Naive thymus-derived CD4-positive, alpha-beta T cell (primary cell): ENCODE measurements at regions of chr3 and their contacts with region 1.

Region 1: DNA sequence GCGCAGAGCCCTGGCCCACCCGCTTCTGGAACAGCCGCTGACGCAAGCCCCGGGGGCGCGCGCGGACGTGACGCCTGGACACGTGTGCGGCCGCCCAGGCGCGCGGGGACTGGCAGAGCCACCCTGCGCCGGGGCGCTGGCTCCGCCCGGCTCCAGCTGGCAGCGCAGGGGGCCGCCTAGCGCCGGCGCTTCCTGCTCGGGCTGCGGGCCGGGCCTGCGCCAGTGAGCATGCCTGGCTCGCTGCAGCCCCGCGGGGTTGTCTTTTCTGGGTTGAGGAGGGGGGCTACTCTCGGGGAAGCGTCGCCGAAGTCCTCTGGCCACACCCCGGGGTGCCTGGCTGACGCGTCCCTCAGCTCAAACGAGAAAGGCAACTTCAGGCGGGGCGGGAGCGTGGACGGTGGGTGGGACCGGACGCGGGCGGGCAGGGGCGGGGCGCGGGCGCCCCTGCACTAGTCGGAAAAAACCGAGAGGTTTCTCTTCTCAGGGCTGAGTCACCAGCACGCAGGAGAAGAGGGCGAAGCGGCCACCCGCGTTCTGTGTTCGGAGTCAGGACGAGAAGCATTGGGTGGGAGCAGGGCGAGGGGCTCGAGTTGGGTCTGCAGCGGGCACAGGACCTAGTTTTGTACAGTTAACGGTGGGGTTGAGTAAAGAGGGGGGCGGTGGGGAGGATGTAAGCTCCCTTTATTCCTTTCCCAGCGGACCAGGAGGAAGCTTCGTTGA is at the start of gene SIAH2:
- DNase-seq: peak; percentile 92 to 95 (median 94)
- ATAC-seq: peak; percentile 89
- H3K4me3 ChIP-seq: peak within 1 kb of the TSS; percentile 81
- H3K4me3 Mint-ChIP-seq: peak within 1 kb of the TSS; percentile 97 to 99 (median 98)
- H3K27ac ChIP-seq: peak within 1 kb of the TSS; percentile 99
- H3K27ac Mint-ChIP-seq: peak within 1 kb of the TSS; percentile 99 to 100 (median 100)
- H3K4me1 ChIP-seq: peaks cover 20 to 22% of the 10 kb centered on the region in 2 donors
- H3K4me1 Mint-ChIP-seq: peaks cover 23 to 59% (median 45%) of the 10 kb centered on the region in 7 donors
- H3K27me3 ChIP-seq: no peaks in the 10 kb centered on the region
- H3K27me3 Mint-ChIP-seq: no peaks in the 10 kb centered on the region
- total RNA-seq, gene SIAH2: 19.8 to 39.2 (median 31.0) TPM

Region 2: DNA sequence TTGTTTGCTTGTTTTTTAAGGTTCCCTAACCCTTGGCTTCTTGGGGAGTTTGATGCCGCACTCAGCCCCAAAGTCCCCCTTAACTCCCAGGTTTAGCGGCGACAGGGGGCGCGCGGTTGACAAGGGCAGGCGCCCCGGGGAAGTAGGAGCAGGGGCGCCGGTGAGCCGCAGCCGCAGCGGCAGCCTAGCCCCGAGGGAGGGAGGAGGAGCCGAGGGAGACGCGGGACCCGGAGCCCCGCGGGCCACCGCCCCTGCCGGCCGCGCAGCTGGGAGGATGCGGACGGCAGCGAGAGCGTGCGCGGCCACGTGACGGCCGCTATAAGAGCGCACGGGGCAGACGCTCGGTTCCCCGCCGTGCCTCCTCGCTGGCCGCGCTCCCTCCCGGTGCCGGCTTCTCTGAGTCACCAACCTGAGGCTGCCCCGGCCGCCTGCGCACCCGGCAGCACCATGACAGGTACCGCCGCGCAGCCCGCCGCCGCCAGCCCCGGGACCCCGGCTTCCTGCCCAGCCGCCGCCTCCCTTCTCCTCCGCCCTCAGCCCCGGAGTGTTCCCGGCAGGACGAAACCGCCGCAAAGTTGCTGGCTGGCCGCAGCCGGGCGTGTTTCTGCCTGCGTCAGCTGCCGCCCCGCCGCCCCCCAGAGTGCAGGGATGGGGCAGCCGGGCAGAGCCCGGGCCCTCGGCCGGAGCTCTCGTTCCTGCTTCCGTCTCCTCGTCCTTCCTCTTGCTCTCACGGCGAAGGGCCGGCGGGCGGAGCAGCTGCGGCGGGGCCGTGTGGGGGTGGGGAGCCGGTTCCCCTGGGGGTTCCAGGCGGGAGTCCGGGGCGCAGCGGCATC is 1771.9 kb before region 1 on chr3 and contains the start of gene GYG1:
- CTCF ChIA-PET with region 1: no interaction called
- POLR2A ChIA-PET with region 1: no interaction called
- intact Hi-C with region 1: loop called in 1 of 2 experiments (anchors 10 kb)
- DNase-seq: peak; percentile 56 to 78 (median 70)
- ATAC-seq: peak; percentile 91
- H3K4me3 ChIP-seq: peak within 1 kb of the TSS; percentile 77
- H3K4me3 Mint-ChIP-seq: peak within 1 kb of the TSS; percentile 70 to 91 (median 87)
- H3K27ac ChIP-seq: peak within 1 kb of the TSS; percentile 76
- H3K27ac Mint-ChIP-seq: peak within 1 kb of the TSS; percentile 41 to 87 (median 80)
- H3K4me1 ChIP-seq: peaks cover 8 to 16% of the 10 kb centered on the region in 2 donors
- H3K4me1 Mint-ChIP-seq: peaks cover 5 to 41% (median 28%) of the 10 kb centered on the region in 7 donors
- H3K27me3 ChIP-seq: no peaks in the 10 kb centered on the region
- H3K27me3 Mint-ChIP-seq: peaks cover 0 to 3% (median 0%) of the 10 kb centered on the region in 5 donors
- total RNA-seq, gene GYG1: 15.5 to 39.3 (median 16.2) TPM

Region 3: GRCh38 chr3:149969940-149970715 is 793.2 kb before region 1 on chr3:
- CTCF ChIA-PET with region 1: no interaction called
- POLR2A ChIA-PET with region 1: no interaction called
- intact Hi-C with region 1: loop called in 1 of 2 experiments (anchors 1 kb)
- DNase-seq: peak; percentile 54 to 81 (median 75)
- ATAC-seq: peak; percentile 64
- H3K4me3 ChIP-seq: peak overlapping the region; percentile 53
- H3K4me3 Mint-ChIP-seq: peak overlapping the region; percentile 85 to 96 (median 92)
- H3K27ac ChIP-seq: peak overlapping the region; percentile 63
- H3K27ac Mint-ChIP-seq: peak overlapping the region in 8 of 9 donors; percentile 60 to 94 (median 86)
- H3K4me1 ChIP-seq: peaks cover 0 to 4% of the 10 kb centered on the region in 2 donors
- H3K4me1 Mint-ChIP-seq: peaks cover 16 to 26% (median 20%) of the 10 kb centered on the region in 7 donors
- H3K27me3 ChIP-seq: peaks cover 0 to 5% of the 10 kb centered on the region in 2 donors
- H3K27me3 Mint-ChIP-seq: peaks cover 6 to 55% (median 26%) of the 10 kb centered on the region in 5 donors

Region 4: DNA sequence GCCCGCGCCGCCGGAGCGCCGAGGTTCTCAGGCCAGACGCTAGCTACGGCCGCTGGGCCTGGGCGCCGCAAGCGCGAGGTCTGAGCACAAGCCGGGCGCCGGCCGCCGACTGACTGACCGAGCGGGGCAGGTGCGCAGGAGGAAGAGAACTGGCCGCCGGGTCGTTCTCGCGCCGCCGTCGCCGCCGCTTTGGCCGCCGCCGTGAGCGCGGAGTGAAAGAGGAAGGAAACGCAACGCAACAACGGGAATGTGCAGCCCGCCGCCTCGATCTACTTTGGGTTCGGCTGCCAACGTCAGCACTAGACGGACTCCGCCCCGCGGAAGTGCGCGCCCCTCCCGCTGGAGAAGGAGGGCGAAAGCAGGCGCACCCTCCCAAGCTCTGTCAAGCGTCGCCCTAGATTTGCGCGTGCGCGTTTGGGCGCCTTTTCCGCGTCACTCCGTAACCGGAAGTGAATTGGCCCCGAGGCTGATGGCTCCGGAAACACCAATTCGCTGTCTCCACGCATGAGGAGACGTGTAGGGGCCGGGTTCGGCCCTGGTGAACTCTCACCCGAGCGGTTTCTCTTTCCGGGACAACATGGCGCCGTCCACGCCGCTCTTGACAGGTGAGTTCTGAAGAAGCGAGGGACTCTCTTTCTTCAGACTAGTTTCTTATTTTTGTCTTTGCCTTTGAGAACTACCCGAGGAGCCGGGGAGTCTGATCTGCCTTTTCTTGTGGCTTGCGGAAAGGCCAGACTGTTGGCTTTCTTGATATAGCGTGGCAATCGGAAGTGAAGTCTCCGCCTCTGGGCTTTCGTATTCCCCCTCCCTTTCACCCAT is 216.8 kb before region 1 on chr3 and contains the starts of genes EIF2A and SERP1:
- CTCF ChIA-PET with region 1: interaction called, 4 read pairs
- POLR2A ChIA-PET with region 1: interaction called, 70 read pairs
- intact Hi-C with region 1: loop called (anchors 1 kb)
- DNase-seq: peak; percentile 97 to 100 (median 100)
- ATAC-seq: peak; percentile 94
- H3K4me3 ChIP-seq: peak within 1 kb of the TSS; percentile 78
- H3K4me3 Mint-ChIP-seq: peak within 1 kb of the TSS; percentile 88 to 99 (median 96)
- H3K27ac ChIP-seq: peak within 1 kb of the TSS; percentile 96
- H3K27ac Mint-ChIP-seq: peak within 1 kb of the TSS; percentile 93 to 100 (median 98)
- H3K4me1 ChIP-seq: peaks cover 15 to 23% of the 10 kb centered on the region in 2 donors
- H3K4me1 Mint-ChIP-seq: peaks cover 34 to 84% (median 79%) of the 10 kb centered on the region in 7 donors
- H3K27me3 ChIP-seq: no peaks in the 10 kb centered on the region
- H3K27me3 Mint-ChIP-seq: no peaks in the 10 kb centered on the region
- total RNA-seq, gene EIF2A: 94.7 to 135 (median 105) TPM
- total RNA-seq, gene SERP1: 89.4 to 120 (median 115) TPM

Region 5: GRCh38 chr3:150737874-150738713 is 25.2 kb before region 1 on chr3:
- CTCF ChIA-PET with region 1: no interaction called
- POLR2A ChIA-PET with region 1: interaction called, 3 read pairs
- intact Hi-C with region 1: loop called (anchors 1 kb)
- DNase-seq: peak in 1 of 9 donors; percentile 49
- ATAC-seq: peak; percentile 41
- H3K4me3 ChIP-seq: no peak overlapping the region
- H3K4me3 Mint-ChIP-seq: peak overlapping the region in 1 of 10 donors; percentile 5
- H3K27ac ChIP-seq: no peak overlapping the region
- H3K27ac Mint-ChIP-seq: peak overlapping the region in 3 of 9 donors; percentile 33 to 59 (median 41)
- H3K4me1 ChIP-seq: peaks cover 0 to 5% of the 10 kb centered on the region in 2 donors
- H3K4me1 Mint-ChIP-seq: peaks cover 17 to 60% (median 49%) of the 10 kb centered on the region in 7 donors
- H3K27me3 ChIP-seq: no peaks in the 10 kb centered on the region
- H3K27me3 Mint-ChIP-seq: no peaks in the 10 kb centered on the region

Region 6: DNA sequence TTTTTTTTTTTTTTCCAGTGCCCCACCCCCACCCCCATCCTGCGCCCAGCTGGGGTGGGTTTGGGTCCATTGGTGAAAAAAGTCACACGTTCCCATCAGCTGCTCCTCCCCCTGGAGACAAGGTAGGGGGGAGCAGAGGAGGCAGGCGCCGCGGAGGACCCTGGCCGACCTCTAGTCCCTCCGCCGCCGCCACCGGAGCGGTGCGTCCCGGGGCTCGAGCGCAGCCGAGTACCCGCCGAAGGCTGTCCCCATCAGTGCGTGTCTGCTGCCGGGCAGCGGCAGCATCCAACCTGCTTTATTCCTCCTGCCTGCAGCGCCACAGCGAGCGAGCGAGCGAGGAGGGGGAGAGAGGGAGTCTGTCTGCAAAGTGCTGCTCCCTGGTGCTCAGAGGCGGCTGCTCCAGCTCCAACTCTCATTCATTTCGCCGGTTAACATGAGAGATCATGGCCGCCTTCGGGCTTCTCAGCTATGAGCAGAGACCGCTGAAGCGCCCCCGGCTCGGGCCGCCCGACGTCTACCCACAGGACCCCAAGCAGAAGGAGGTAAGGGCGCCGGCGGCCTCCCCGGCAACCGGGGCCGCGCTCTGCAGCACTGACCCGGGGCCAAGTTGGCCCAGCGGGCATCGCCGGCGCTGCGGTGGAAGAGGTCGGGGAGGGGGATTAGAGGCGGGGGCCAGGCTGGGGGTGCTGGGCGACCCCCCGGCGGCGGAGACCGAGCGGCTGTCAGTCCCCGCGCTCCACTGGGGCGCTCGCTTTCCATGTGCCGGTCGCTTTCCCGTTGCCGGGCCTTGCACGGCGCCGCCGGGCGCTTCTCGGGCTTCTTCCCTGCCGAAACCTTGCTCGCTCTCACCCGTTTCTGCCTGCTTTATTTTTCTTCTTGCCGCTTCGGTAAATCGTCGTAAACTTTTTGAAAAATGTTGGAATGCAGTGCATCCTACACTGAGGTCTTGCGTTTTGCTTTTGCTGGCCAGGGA is 323.5 kb after region 1 on chr3:
- CTCF ChIA-PET with region 1: interaction called, 4 read pairs
- POLR2A ChIA-PET with region 1: no interaction called
- intact Hi-C with region 1: loop called (anchors 1 kb)
- DNase-seq: peak; percentile 32 to 72 (median 50)
- ATAC-seq: peak; percentile 88
- H3K4me3 ChIP-seq: peak overlapping the region; percentile 58
- H3K4me3 Mint-ChIP-seq: peak overlapping the region; percentile 85 to 94 (median 90)
- H3K27ac ChIP-seq: no peak overlapping the region
- H3K27ac Mint-ChIP-seq: peak overlapping the region in 4 of 9 donors; percentile 20 to 73 (median 57)
- H3K4me1 ChIP-seq: peaks cover 0 to 6% of the 10 kb centered on the region in 2 donors
- H3K4me1 Mint-ChIP-seq: peaks cover 0 to 21% (median 11%) of the 10 kb centered on the region in 7 donors
- H3K27me3 ChIP-seq: peaks cover 0 to 10% of the 10 kb centered on the region in 2 donors
- H3K27me3 Mint-ChIP-seq: peaks cover 31 to 65% (median 58%) of the 10 kb centered on the region in 5 donors

Region 7: DNA sequence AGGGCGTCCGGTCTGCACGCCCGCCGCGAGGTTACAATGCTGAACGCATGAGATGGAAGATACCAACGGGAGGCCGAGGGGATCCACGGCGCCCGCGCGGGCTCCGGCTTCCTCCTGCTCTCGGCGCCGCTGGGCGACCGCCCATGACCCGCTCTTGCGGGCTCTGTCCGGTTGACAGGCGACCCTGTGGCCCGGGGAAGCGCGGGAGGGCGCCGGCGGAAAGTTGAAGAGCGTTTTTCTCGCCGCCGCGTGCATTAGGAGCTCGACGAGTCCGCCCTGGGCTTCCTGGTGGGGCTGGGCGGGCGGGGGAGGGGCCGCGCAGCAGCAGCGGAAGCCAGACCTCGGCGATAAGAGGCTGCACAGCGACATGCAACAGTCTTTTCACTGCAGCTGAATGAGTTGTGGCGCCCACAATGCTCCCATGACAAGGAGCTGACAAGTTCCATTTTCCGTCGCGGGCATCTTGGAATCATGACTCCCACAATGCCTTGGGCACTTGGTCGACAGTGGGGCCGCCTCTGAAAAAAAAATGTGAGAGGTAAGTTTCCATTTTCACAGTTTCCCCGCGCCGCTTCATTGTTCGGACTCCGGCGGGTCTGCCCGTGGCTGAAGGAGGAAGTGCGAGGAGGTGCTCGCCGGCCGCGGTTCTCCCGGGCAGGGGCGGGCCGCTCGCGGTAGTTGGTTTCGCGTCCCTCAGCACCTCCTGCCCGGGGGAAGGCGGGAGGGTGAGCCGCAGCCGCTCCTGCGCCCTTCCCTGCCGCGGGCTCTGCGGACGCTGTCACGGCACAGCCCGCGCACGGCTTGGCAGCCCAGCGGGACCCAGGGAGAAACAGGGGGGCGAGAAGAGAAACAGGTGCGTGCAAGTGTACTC is 1505.5 kb after region 1 on chr3 and contains the start of gene MBNL1:
- CTCF ChIA-PET with region 1: no interaction called
- POLR2A ChIA-PET with region 1: no interaction called
- intact Hi-C with region 1: loop called (anchors 5 to 10 kb)
- DNase-seq: peak; percentile 65 to 89 (median 87)
- ATAC-seq: peak; percentile 77
- H3K4me3 ChIP-seq: peak within 1 kb of the TSS; percentile 77
- H3K4me3 Mint-ChIP-seq: peak within 1 kb of the TSS; percentile 78 to 100 (median 94)
- H3K27ac ChIP-seq: peak within 1 kb of the TSS; percentile 99
- H3K27ac Mint-ChIP-seq: peak within 1 kb of the TSS; percentile 88 to 98 (median 95)
- H3K4me1 ChIP-seq: peaks cover 34 to 46% of the 10 kb centered on the region in 2 donors
- H3K4me1 Mint-ChIP-seq: peaks cover 46 to 69% (median 64%) of the 10 kb centered on the region in 7 donors
- H3K27me3 ChIP-seq: no peaks in the 10 kb centered on the region
- H3K27me3 Mint-ChIP-seq: no peaks in the 10 kb centered on the region
- total RNA-seq, gene MBNL1: 459 to 675 (median 508) TPM